Astrocyte of the cerebellum (primary cell): ENCODE measurements at regions of chr3 and their contacts with region 1.

Region 1: DNA sequence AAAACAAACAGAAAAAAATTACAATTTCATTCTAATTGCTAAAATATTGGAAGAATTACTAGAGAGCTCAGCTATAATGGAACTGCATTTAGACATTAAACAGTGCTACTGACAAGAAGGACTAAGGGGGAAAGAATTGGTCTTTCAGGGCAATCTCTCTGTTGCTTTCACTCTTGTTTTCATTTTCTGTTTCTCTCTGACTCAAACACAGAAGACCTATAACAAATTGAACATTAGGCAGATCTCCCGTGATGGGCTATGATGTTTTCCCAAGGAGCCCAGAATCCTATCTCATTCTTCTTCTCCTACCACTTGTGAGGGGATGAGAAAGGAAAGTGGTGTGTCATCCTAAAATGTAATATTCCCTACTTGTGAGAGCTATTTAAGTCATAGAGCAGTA is 358.0 kb upstream of the TGFBR2 start:
- DNase-seq: no peak
- H3K4me3 ChIP-seq: no peak overlapping the region
- CTCF ChIP-seq: no peak

Region 2: GRCh38 chr3:30059240-30059639 is 189.2 kb before region 1 on chr3:
- in situ Hi-C with region 1: no loop called
- DNase-seq: no peak
- H3K4me3 ChIP-seq: no peak overlapping the region
- CTCF ChIP-seq: no peak

Region 3: GRCh38 chr3:30180310-30181177 is 67.9 kb before region 1 on chr3:
- in situ Hi-C with region 1: no loop called
- DNase-seq: no peak
- H3K4me3 ChIP-seq: no peak overlapping the region
- CTCF ChIP-seq: no peak

Region 4: GRCh38 chr3:30342319-30343060 is 94.1 kb after region 1 on chr3:
- in situ Hi-C with region 1: loop called (anchors 5 kb)
- DNase-seq: peak; percentile 91
- H3K4me3 ChIP-seq: no peak overlapping the region
- CTCF ChIP-seq: no peak

Region 5: GRCh38 chr3:30356866-30357753 is 108.7 kb after region 1 on chr3:
- in situ Hi-C with region 1: no loop called
- DNase-seq: no peak
- H3K4me3 ChIP-seq: no peak overlapping the region
- CTCF ChIP-seq: no peak